Activated CD4-positive, alpha-beta T cell treated with anti-CD3 and anti-CD28 coated beads for 36 hours (primary cell): ENCODE measurements at regions of chr15 and their contacts with region 1.

Region 1: DNA sequence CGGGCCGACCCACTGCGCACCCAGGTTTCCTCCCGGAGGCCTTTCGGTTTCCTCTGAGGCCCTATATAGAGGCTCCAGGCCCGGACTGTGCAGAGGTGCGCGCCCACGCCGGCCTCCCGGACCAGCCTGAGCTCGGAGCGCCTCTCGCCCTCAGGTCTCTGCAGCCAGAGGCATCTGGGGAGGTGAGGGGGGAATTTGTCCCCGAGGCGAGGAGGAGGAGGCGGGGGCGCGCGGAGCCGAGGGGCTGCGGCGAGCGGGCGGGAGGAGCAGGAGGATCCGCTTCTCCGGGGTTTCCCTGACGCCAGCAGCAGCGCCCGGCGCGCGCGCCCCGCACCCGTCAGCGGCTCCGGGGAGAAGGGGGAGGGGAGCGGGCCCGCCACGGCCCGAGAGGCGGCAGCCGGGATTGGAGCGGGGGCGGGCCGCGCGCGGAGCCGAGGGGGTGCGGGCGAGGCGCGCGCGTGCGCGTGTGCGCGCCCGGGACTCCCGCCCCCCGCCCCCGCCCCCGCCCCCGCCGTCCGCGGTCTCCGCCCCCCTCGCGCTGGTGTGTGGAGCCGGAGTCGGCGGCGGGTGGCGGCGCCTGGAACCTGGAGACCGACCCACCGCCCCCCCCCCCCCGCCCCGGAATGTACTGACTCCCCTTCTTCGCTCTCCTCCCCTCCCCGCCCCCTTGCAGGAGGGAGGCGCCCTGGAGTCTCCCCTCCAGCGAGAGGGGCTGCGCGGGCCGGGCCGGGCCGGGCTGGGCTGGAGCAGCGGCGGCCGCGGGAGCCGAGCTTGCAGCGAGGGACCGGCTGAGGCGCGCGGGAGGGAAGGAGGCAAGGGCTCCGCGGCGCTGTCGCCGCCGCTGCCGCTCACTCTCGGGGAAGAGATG is at the start of gene NEO1:
- DNase-seq: peak; percentile 87
- ATAC-seq: peak; percentile 80
- H3K4me3 Mint-ChIP-seq: peak within 1 kb of the TSS; percentile 74
- H3K27ac Mint-ChIP-seq: peak within 1 kb of the TSS; percentile 53
- H3K4me1 Mint-ChIP-seq: peaks cover 6% of the 10 kb centered on the region
- H3K27me3 Mint-ChIP-seq: peaks cover 16% of the 10 kb centered on the region
- total RNA-seq, gene NEO1: 6.6 to 8.0 TPM

Region 2: GRCh38 chr15:72272213-72273002 is 779.6 kb before region 1 on chr15 and contains the start of gene PARP6:
- CTCF ChIA-PET with region 1: no interaction called
- POLR2A ChIA-PET with region 1: no interaction called
- intact Hi-C with region 1: loop called in 1 of 2 experiments (anchors 5 kb)
- DNase-seq: peak; percentile 99
- ATAC-seq: peak; percentile 98
- H3K4me3 Mint-ChIP-seq: peak within 1 kb of the TSS; percentile 80
- H3K27ac Mint-ChIP-seq: peak within 1 kb of the TSS; percentile 92
- H3K4me1 Mint-ChIP-seq: peaks cover 35% of the 10 kb centered on the region
- H3K27me3 Mint-ChIP-seq: no peaks in the 10 kb centered on the region
- total RNA-seq, gene PARP6: 41.4 to 58.2 TPM

Region 3: GRCh38 chr15:72685925-72686794 is 365.9 kb before region 1 on chr15 and contains the starts of genes BBS4 and HIGD2B:
- CTCF ChIA-PET with region 1: no interaction called
- POLR2A ChIA-PET with region 1: no interaction called
- intact Hi-C with region 1: loop called (anchors 1 to 5 kb)
- DNase-seq: peak; percentile 93
- ATAC-seq: peak; percentile 96
- H3K4me3 Mint-ChIP-seq: peak within 1 kb of the TSS; percentile 89
- H3K27ac Mint-ChIP-seq: peak within 1 kb of the TSS; percentile 92
- H3K4me1 Mint-ChIP-seq: peaks cover 20% of the 10 kb centered on the region
- H3K27me3 Mint-ChIP-seq: no peaks in the 10 kb centered on the region
- total RNA-seq, gene BBS4: 13.7 to 14.9 TPM
- total RNA-seq, gene HIGD2B: not detected

Region 4: GRCh38 chr15:73081321-73081958 is 29.4 kb after region 1 on chr15:
- CTCF ChIA-PET with region 1: no interaction called
- POLR2A ChIA-PET with region 1: no interaction called
- intact Hi-C with region 1: loop called in 1 of 2 experiments (anchors 2 kb)
- DNase-seq: peak; percentile 8
- ATAC-seq: no peak
- H3K4me3 Mint-ChIP-seq: no peak overlapping the region
- H3K27ac Mint-ChIP-seq: no peak overlapping the region
- H3K4me1 Mint-ChIP-seq: no peaks in the 10 kb centered on the region
- H3K27me3 Mint-ChIP-seq: no peaks in the 10 kb centered on the region